ENCODE measurements at regions of chr4 and their contacts with region 1.

Region 1: GRCh38 chr4:47914220-47914925 is at the start of gene NFXL1:
- DNase-seq: peak; percentile 90
- ATAC-seq: peak; percentile 96
- H3K4me3 Mint-ChIP-seq: peak within 1 kb of the TSS; percentile 98
- H3K27ac Mint-ChIP-seq: peak within 1 kb of the TSS; percentile 92
- H3K4me1 Mint-ChIP-seq: peaks cover 31% of the 10 kb centered on the region
- H3K27me3 Mint-ChIP-seq: no peaks in the 10 kb centered on the region
- CTCF ChIP-seq: no peak
- total RNA-seq, gene NFXL1: 10.0 and 11.1 TPM in 2 replicates

Region 2: GRCh38 chr4:47926639-47927258 is 12.4 kb after region 1 on chr4:
- CTCF ChIA-PET with region 1: interaction called, 3 read pairs
- POLR2A ChIA-PET with region 1: interaction called, 4 read pairs
- intact Hi-C with region 1: loop called (anchors 2 kb)
- DNase-seq: no peak
- ATAC-seq: peak; percentile 85
- H3K4me3 Mint-ChIP-seq: peak overlapping the region; percentile 44
- H3K27ac Mint-ChIP-seq: no peak overlapping the region
- H3K4me1 Mint-ChIP-seq: peaks cover 26% of the 10 kb centered on the region
- H3K27me3 Mint-ChIP-seq: peaks cover 8% of the 10 kb centered on the region
- CTCF ChIP-seq: no peak

Region 3: GRCh38 chr4:48033825-48034413 is 119.5 kb after region 1 on chr4:
- CTCF ChIA-PET with region 1: no interaction called
- POLR2A ChIA-PET with region 1: no interaction called
- intact Hi-C with region 1: loop called (anchors 2 kb)
- DNase-seq: no peak
- ATAC-seq: peak; percentile 69
- H3K4me3 Mint-ChIP-seq: no peak overlapping the region
- H3K27ac Mint-ChIP-seq: peak overlapping the region; percentile 36
- H3K4me1 Mint-ChIP-seq: peaks cover 46% of the 10 kb centered on the region
- H3K27me3 Mint-ChIP-seq: peaks cover 2% of the 10 kb centered on the region
- CTCF ChIP-seq: peak; percentile 23